ENCODE measurements at regions of chr2 and their contacts with region 1.

Region 1: DNA sequence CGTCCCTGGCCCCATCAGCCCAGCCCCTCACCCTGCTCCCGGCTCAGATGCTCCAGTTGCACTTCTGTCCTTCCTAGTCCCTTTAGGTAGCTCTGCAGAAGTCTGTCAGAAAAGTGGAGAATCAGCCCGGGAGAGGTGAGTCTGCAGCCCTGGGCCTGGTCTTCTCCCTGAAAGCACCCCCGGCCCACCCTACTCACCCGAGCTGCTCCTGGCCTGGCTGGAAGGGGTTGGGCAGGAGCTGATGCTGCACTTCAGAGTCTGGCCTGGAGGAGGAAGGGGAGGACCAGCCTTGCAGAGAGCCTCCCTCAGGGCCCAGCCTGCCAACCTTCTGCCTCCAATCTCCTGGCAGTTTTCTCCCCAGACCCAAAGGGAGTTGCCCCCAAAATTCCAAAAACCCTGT is 15.8 kb downstream of the KHK start:
- DNase-seq: no peak
- ATAC-seq: no peak

Region 2: DNA sequence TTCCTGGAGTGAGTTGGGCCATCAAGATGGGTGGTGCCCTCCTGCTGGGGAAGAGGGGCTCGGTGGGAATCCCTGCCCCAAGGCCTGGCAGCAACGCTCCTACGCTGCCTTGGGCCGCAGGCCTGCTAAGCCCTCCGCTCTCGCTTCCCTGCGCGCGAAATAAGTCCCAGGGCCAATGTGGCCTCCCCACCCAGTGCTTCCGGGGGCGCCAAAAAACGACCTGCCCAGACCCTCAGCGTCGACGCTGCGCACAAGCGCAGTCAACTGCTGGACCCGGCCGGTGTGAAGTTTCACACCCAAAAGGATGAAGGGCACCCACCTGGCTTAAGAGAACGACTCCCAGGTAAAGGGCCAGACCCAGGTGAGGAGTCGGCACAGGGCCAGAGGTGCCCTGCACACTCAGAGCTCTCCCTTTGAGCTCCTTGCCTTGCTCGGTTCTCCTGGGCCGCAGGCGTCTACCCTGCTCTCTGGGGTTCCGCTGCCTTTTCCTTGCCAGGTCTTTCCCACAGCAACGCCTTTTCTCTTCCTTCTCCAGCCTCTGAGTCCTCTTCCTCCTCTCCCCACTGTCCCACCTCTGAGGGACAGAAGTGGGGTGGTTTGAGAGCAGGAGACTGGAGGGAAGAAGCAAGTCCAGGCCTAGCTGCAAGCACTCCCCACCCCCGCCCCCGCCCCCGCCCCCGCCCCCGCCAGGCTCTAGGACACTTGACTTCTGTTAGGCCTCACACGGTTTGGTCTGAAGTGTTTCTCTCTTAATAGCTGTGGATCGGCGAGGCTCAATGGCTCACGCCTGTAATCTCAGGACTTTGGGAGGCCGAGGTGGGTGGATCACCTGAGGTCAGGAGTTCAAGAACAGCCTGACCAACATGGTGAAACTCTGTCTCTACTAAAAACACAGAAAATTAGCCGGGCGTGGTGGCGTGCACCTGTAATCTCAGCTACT is 173.2 kb after region 1 on chr2 and contains the start of gene DNAJC5G:
- intact Hi-C with region 1: loop called (anchors 5 kb)
- DNase-seq: no peak
- ATAC-seq: no peak
- total RNA-seq, gene DNAJC5G: 2.3 TPM